ENCODE measurements at regions of chr5 and their contacts with region 1.

Region 1: GRCh38 chr5:67268231-67269021 is 71.8 kb upstream of the CD180 start:
- DNase-seq: peak; percentile 95
- ATAC-seq: peak; percentile 89
- H3K4me3 ChIP-seq: no peak overlapping the region
- H3K27ac ChIP-seq: peak overlapping the region; percentile 98; the same call in 1 of the 2 replicates
- H3K4me1 ChIP-seq: peaks cover 16% of the 10 kb centered on the region
- H3K27me3 ChIP-seq: no peaks in the 10 kb centered on the region
- CTCF ChIP-seq: no peak
- POLR2A ChIP-seq: no peak
- RAD21 ChIP-seq: no peak

Region 2: GRCh38 chr5:67301285-67301903 is 33.0 kb after region 1 on chr5:
- CTCF ChIA-PET with region 1: interaction called, 3 read pairs
- POLR2A ChIA-PET with region 1: no interaction called
- dilution Hi-C with region 1: no loop called
- in situ Hi-C with region 1: no loop called
- intact Hi-C with region 1: loop called (anchors 1 kb)
- DNase-seq: peak; percentile 82
- ATAC-seq: peak; percentile 74
- H3K4me3 ChIP-seq: no peak overlapping the region
- H3K27ac ChIP-seq: peak overlapping the region; percentile 70
- H3K4me1 ChIP-seq: peaks cover 22% of the 10 kb centered on the region
- H3K27me3 ChIP-seq: no peaks in the 10 kb centered on the region
- CTCF ChIP-seq: no peak
- POLR2A ChIP-seq: no peak
- RAD21 ChIP-seq: no peak

Region 3: GRCh38 chr5:67941614-67942401 is 673.4 kb after region 1 on chr5:
- CTCF ChIA-PET with region 1: no interaction called
- POLR2A ChIA-PET with region 1: no interaction called
- dilution Hi-C with region 1: no loop called
- in situ Hi-C with region 1: no loop called
- intact Hi-C with region 1: no loop called
- DNase-seq: no peak
- ATAC-seq: no peak
- H3K4me3 ChIP-seq: no peak overlapping the region
- H3K27ac ChIP-seq: no peak overlapping the region
- H3K4me1 ChIP-seq: no peaks in the 10 kb centered on the region
- H3K27me3 ChIP-seq: no peaks in the 10 kb centered on the region
- CTCF ChIP-seq: no peak
- POLR2A ChIP-seq: no peak
- RAD21 ChIP-seq: no peak

Measured in IMR-90 (cell line).